ENCODE measurements at regions of chr3 and their contacts with region 1.

Region 1: DNA sequence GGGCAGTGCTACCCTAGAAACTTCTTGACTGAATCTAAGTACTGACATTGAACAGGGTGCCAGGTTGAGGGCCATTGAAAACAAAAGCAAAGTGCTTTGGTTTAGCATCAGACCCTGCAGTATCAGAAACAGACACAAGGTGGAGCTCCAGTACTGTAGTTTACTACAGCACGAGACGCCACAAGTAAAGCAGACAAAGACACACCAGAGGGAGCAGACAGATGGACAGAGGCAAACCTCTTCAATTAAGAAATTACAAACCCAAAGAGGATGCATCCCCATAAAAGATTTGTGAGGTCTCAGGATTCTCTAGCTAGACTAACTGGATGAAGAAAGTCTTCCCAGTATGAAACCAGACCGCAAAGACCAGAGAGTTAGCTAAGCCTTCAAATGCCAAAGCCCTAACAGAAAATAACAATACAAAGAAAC is 16.6 kb downstream of the TOP2B start:
- DNase-seq: peak; percentile 77
- ATAC-seq: peak; percentile 98
- H3K4me3 ChIP-seq: no peak overlapping the region
- H3K27ac ChIP-seq: no peak overlapping the region
- H3K4me1 ChIP-seq: no peaks in the 10 kb centered on the region
- H3K27me3 ChIP-seq: no peaks in the 10 kb centered on the region
- CTCF ChIP-seq: peak; percentile 88 to 97 (median 92)
- POLR2A ChIP-seq: no peak
- RAD21 ChIP-seq: peak; percentile 90

Region 2: GRCh38 chr3:25831578-25831977 is 183.5 kb after region 1 on chr3:
- CTCF ChIA-PET with region 1: interaction called, 21 read pairs
- POLR2A ChIA-PET with region 1: no interaction called
- RAD21 ChIA-PET with region 1: interaction called in 1 of 2 experiments, 5 read pairs
- intact Hi-C with region 1: loop called (anchors 1 kb)
- DNase-seq: peak; percentile 31
- ATAC-seq: peak; percentile 85
- H3K4me3 ChIP-seq: no peak overlapping the region
- H3K27ac ChIP-seq: no peak overlapping the region
- H3K4me1 ChIP-seq: no peaks in the 10 kb centered on the region
- H3K27me3 ChIP-seq: no peaks in the 10 kb centered on the region
- CTCF ChIP-seq: peak; percentile 29 to 42 (median 39); a peak in 5 of 6 replicates
- POLR2A ChIP-seq: no peak
- RAD21 ChIP-seq: peak; percentile 58

Region 3: DNA sequence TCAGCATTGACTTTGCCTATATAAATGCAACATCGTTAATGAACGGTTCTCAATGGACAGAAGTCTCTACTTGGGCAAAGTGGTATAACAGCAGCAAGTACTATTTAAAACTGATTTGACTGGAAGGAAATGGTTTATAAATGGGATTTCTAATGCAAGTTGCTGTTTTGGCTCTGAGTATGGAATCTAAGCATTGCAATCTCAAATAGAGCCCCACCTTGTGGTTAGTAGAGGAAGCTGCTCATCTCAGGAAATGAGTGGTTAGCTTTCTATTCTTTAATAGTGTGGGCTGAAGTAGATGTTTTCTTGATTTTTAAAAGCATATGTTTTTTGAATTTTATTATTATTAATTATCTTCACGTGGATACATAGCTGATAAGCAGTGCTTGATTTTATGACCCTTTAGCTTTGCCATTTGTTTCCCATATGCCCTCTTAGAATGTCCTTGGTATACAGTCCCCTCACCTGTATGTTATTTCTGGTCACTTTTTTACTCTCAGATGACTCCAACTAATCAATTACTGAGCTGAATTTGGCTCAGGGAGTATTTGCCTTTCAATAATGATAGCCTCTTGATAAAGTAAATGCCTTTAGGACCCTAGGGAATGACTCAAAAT is 208.9 kb after region 1 on chr3:
- CTCF ChIA-PET with region 1: interaction called, 16 read pairs
- POLR2A ChIA-PET with region 1: interaction called, 3 read pairs
- RAD21 ChIA-PET with region 1: interaction called, 3 read pairs
- intact Hi-C with region 1: loop called (anchors 1 kb)
- DNase-seq: peak; percentile 22
- ATAC-seq: peak; percentile 86
- H3K4me3 ChIP-seq: no peak overlapping the region
- H3K27ac ChIP-seq: no peak overlapping the region
- H3K4me1 ChIP-seq: no peaks in the 10 kb centered on the region
- H3K27me3 ChIP-seq: no peaks in the 10 kb centered on the region
- CTCF ChIP-seq: peak; percentile 57 to 83 (median 77); a peak in 5 of 6 replicates
- POLR2A ChIP-seq: no peak
- RAD21 ChIP-seq: peak; percentile 62

Region 4: DNA sequence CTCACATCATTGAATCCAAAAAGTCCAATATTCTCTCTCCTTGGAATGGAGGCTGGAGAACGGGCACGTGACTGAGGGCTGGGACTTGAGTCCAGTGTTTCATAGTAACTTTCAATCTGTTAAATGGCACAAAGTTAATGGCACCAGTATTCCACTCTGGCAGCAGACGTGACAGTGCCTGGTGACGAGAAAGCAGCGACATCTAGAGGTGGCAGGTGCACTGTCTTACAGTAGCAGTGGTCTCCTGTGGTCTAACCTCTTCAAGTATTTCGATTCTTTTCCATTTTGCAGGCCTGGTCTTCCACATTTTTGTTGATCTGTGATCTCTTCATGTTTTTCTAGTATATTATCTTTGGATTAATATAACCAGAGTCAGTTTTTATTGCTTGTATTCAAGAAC is 248.9 kb after region 1 on chr3:
- CTCF ChIA-PET with region 1: interaction called, 3 read pairs
- POLR2A ChIA-PET with region 1: no interaction called
- RAD21 ChIA-PET with region 1: no interaction called
- intact Hi-C with region 1: loop called (anchors 2 kb)
- DNase-seq: peak; percentile 51
- ATAC-seq: peak; percentile 99
- H3K4me3 ChIP-seq: no peak overlapping the region
- H3K27ac ChIP-seq: no peak overlapping the region
- H3K4me1 ChIP-seq: no peaks in the 10 kb centered on the region
- H3K27me3 ChIP-seq: peaks cover 11% of the 10 kb centered on the region; the same call in 1 of the 2 replicates
- CTCF ChIP-seq: peak; percentile 57 to 85 (median 83); a peak in 5 of 6 replicates
- POLR2A ChIP-seq: no peak
- RAD21 ChIP-seq: peak; percentile 73

Region 5: DNA sequence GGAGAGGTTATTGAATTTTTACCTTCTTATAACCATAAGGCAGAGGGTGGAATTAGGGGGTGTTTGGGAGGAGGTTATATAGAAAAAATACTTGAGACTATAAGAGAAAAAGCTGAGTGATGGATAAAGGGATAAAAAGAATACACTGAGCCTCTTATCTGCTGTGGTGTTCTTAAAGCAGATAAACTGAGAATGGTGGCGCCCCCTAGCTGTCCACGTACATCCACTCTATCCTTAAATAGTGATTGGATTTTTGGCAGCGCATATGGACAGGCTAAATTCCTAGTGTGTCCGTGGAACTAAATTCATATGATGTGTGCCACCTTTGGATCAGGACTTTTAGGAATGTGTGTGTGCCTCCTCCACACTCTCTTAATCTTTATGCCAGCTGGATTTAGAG is 262.9 kb after region 1 on chr3:
- CTCF ChIA-PET with region 1: interaction called, 3 read pairs
- POLR2A ChIA-PET with region 1: no interaction called
- RAD21 ChIA-PET with region 1: no interaction called
- intact Hi-C with region 1: loop called (anchors 5 kb)
- DNase-seq: peak; percentile 39
- ATAC-seq: peak; percentile 80
- H3K4me3 ChIP-seq: no peak overlapping the region
- H3K27ac ChIP-seq: no peak overlapping the region
- H3K4me1 ChIP-seq: no peaks in the 10 kb centered on the region
- H3K27me3 ChIP-seq: peaks cover 13% of the 10 kb centered on the region; the same call in 1 of the 2 replicates
- CTCF ChIP-seq: peak in 2 of 3 experiments; percentile 70 to 82; a peak in 4 of 6 replicates
- POLR2A ChIP-seq: no peak
- RAD21 ChIP-seq: peak; percentile 43

Region 6: GRCh38 chr3:25962249-25962648 is 314.1 kb after region 1 on chr3:
- CTCF ChIA-PET with region 1: interaction called, 8 read pairs
- POLR2A ChIA-PET with region 1: no interaction called
- RAD21 ChIA-PET with region 1: no interaction called
- intact Hi-C with region 1: loop called (anchors 2 kb)
- DNase-seq: peak; percentile 13
- ATAC-seq: peak; percentile 90
- H3K4me3 ChIP-seq: no peak overlapping the region
- H3K27ac ChIP-seq: no peak overlapping the region
- H3K4me1 ChIP-seq: no peaks in the 10 kb centered on the region
- H3K27me3 ChIP-seq: no peaks in the 10 kb centered on the region
- CTCF ChIP-seq: peak; percentile 14 to 58 (median 44); a peak in 4 of 6 replicates
- POLR2A ChIP-seq: no peak
- RAD21 ChIP-seq: peak; percentile 47

Region 7: DNA sequence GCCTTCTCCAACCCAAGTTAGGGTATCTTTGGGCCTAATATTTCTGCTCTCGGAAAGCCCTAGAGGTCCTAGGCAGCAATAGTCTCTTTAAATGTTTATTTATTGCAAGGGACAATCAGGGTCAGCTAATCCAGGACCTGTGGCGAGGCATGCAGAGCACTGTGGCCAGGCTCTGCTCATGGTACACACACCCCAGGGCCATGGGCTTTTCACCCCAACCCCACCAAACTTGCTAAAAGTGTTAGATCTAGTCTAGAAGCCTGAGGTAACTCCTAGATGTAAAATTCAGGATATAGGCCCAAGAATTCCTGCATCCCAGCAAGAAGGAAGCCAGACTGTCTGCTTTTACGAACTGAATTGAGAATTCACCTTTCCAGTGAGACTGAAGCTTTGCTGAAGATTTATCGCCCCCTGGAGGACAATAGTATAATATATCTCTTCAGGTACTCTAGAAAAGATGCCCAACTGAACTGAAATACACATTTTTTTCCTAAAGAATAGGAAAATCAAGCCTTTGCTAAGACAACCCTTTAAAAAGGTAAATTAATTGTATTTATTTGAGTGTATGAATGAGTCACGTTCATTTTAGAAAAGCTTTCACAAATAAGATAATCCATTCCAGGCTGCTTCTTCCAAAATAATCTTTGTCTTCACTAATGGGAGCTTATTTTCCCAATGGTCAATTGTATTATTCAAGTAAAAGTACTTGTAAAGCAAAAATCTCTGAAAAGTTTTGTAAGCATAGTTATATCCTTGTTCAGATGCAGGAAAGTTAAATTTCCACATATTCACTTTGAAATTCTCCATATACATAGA is 1064.3 kb after region 1 on chr3:
- CTCF ChIA-PET with region 1: no interaction called
- POLR2A ChIA-PET with region 1: no interaction called
- RAD21 ChIA-PET with region 1: no interaction called
- intact Hi-C with region 1: loop called (anchors 5 kb)
- DNase-seq: peak; percentile 3
- ATAC-seq: no peak
- H3K4me3 ChIP-seq: no peak overlapping the region
- H3K27ac ChIP-seq: no peak overlapping the region
- H3K4me1 ChIP-seq: no peaks in the 10 kb centered on the region
- H3K27me3 ChIP-seq: no peaks in the 10 kb centered on the region
- CTCF ChIP-seq: peak; percentile 25 to 65 (median 34); a peak in 4 of 6 replicates
- POLR2A ChIP-seq: no peak
- RAD21 ChIP-seq: peak; percentile 51